ENCODE measurements at regions of chr5 and their contacts with region 1.

Region 1: DNA sequence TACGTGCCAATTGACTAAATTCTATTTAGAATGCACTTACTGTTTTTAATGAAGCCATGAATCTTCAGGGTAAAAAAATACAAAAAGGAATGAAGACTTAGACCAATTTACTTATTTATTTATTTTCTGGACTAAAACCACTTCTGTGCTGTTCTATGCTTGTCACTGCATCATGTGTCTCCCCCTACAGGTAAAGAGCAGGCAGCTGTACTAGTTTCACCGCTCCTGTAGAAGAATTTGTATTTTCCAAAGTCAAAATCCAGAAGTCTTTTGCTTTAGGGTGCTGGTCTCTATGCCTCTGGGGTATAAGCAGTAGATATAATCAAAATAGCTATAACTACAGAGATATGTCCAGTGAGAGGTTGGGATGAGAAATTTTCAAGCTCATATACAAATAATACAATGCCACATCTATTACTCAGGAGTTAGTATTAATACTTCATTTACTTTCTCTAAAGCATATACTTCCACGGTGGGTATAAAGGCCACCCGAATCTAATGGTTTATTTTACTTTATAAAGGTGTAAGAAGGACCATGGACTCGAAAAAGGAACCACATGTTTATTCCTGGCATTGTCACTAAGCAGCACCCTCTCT is 591.5 kb downstream of the RAB3C start:
- DNase-seq: peak; percentile 61
- H3K4me3 Mint-ChIP-seq: no peak overlapping the region
- H3K27ac Mint-ChIP-seq: no peak overlapping the region
- H3K4me1 Mint-ChIP-seq: peaks cover 46% of the 10 kb centered on the region
- H3K27me3 Mint-ChIP-seq: no peaks in the 10 kb centered on the region

Region 2: DNA sequence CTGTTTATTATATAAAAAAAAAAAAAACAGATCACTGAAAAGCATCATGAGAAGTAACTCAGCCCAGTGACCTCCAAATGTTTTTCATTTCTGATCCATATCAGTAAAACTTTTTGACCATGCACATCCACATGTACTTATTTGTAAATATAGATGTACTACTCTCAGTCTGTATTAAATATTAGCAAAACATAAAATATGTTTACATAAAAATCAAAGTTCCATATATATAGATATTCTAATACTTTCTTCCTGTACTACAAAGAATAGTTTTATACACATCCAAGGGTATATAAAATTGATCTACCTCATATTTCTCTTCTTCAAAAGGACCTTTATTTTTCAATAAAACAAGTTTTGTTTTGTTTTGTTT is 282.4 kb before region 1 on chr5:
- CTCF ChIA-PET with region 1: interaction called, 13 read pairs
- POLR2A ChIA-PET with region 1: no interaction called
- DNase-seq: no peak
- H3K4me3 Mint-ChIP-seq: no peak overlapping the region
- H3K27ac Mint-ChIP-seq: no peak overlapping the region
- H3K4me1 Mint-ChIP-seq: peaks cover 27% of the 10 kb centered on the region
- H3K27me3 Mint-ChIP-seq: no peaks in the 10 kb centered on the region

Region 3: GRCh38 chr5:59039296-59040023 is 134.9 kb before region 1 on chr5:
- CTCF ChIA-PET with region 1: interaction called, 21 read pairs
- POLR2A ChIA-PET with region 1: no interaction called
- DNase-seq: peak; percentile 92
- H3K4me3 Mint-ChIP-seq: peak overlapping the region; percentile 84
- H3K27ac Mint-ChIP-seq: peak overlapping the region; percentile 99
- H3K4me1 Mint-ChIP-seq: peaks cover 43% of the 10 kb centered on the region
- H3K27me3 Mint-ChIP-seq: no peaks in the 10 kb centered on the region

Region 4: DNA sequence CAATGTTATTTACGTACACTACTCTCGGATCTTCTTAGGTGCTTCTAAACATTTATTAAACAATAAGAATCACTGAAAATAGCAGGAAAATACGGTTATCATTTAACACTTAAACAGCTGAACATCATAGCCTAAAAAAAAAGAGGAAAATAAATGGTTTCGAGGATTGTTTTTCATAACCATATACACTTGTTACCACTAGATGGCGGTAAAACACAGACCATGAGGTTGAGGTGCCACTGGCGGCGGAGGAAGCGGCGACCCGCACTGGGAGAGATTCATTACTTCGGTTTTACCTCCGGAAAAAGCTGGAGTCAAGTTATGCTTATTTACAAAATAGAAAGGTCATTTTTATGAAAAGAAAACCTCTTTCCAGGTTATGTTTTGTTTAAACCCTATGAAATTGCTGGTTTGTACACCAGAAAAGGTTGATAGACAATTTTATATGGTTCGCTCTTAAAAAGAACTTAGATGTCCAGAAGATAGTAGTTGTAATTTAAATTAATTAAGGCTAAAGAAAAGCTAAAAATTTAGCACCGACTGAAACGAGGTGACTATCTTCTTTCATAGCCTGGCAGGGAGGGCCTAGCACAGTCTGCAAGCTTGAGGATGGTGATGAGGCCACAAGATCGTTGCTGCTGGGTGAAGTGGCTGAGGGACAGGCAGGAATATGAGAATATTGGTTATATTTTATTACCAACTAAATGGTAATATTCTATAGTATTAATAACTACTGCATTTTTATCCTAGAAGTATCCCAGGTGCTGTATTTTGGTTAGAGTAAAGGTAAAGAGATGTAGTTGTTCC is 14.3 kb after region 1 on chr5:
- CTCF ChIA-PET with region 1: interaction called, 21 read pairs
- POLR2A ChIA-PET with region 1: no interaction called
- DNase-seq: peak; percentile 75
- H3K4me3 Mint-ChIP-seq: no peak overlapping the region
- H3K27ac Mint-ChIP-seq: no peak overlapping the region
- H3K4me1 Mint-ChIP-seq: peaks cover 3% of the 10 kb centered on the region
- H3K27me3 Mint-ChIP-seq: peaks cover 22% of the 10 kb centered on the region

Measured in activated CD4-positive, alpha-beta T cell treated with anti-CD3 and anti-CD28 coated beads, Interleukin-2, amount 10 ng/mL, durations not matched to agents 7 days and 5 days (primary cell).